Psoas muscle (tissue), 8 donors: ENCODE measurements at regions of chr11 and their contacts with region 1.

Region 1: DNA sequence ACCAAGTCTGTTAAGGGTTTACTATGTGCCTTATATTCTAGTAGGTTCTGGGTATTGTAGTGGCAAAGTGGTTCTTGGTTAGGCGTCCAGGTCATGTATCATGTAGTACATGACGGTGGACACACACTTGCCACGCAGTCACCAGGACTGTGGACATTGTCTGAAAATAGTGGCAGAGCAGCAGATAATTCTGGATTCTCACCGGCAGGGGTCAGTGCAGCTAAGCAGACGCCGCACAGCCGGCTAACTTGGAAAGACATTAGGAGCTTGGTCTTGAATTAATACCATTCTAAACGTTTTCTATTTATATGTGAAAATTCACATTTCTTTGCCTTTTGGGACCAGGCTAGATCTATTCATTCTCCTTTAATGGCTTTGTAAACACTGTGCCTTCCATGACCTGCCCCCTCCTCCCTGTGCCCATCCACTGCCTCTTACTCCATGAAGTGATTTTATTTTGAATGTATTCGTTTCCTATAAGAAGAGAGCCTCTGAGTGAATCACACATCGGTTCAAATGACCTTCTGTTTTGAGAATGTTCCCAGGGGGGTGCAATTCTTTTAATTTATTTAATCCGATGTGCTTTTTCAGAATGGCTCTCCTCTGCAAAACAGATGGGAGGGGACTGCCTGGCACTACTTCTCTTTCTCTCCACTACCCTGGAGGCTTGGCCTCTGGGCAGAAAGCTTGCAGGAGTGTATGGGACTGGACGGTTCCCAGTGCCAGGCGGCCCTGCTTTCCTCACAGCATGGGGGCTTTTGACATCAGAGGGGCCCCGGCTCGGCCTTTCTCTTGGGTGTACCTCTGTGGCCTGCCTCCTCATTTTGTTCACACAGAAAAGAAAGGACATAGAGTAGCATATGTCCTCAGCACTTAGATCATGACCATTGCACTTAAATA is 378.0 kb downstream of the NTM start:
- DNase-seq: peak; percentile 47 to 55
- ATAC-seq: peak in 2 of 4 donors; percentile 54 to 58
- H3K4me3 ChIP-seq: no peak overlapping the region
- H3K27ac ChIP-seq: no peak overlapping the region
- H3K4me1 ChIP-seq: no peaks in the 10 kb centered on the region
- H3K27me3 ChIP-seq: peaks cover 0 to 3% (median 0%) of the 10 kb centered on the region in 3 donors
- CTCF ChIP-seq: peak; percentile 61

Region 2: DNA sequence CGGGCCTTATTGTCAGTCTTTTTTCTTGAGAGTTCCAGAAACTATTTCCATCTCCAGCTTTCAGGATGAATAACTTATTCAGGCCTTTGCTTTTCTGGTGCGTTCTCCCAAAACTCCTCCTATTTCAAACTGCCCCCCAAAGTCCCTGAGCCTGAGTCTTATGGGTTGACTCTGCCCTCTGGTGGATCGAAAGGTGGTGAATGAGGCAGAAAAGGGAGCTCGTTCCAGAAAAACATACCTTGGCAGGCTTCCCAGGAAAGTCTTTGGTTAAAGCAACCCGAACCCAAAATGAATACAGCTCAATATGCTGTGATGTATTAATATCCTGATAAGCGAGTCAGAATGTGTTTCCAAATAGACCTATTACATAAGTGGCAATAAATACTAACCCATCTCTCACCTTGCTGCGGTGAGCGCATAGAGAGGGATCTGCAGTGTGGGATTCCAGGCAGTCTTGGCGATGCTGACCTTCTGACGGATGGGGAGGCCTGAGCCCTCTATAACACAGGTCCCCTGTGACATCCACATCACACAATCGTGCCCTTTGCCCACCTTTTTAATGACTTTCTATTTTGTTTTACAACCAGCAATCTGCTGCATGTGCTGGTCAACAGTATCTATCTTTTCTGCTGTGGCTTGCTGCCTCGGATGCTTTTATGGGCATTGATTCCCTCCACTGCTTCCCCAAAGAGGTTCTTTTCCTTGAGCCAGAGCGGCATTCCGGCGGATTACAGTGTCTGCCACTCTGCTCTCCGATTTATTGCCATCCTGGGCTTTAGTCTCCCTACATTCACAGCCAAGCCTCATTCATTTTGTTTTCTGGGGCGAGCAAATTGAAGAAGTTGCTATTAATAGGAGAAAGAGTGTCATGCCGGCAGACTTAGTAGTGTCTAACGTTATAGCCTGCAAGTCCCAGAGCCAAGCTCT is 378.8 kb after region 1 on chr11:
- intact Hi-C with region 1: loop called in 1 of 2 experiments (anchors 10 kb)
- DNase-seq: peak in 1 of 2 donors; percentile 28
- ATAC-seq: peak in 2 of 4 donors; percentile 44 to 82
- H3K4me3 ChIP-seq: peak overlapping the region; percentile 46
- H3K27ac ChIP-seq: no peak overlapping the region
- H3K4me1 ChIP-seq: peaks cover 4% of the 10 kb centered on the region
- H3K27me3 ChIP-seq: no peaks in the 10 kb centered on the region
- CTCF ChIP-seq: peak; percentile 26

Region 3: DNA sequence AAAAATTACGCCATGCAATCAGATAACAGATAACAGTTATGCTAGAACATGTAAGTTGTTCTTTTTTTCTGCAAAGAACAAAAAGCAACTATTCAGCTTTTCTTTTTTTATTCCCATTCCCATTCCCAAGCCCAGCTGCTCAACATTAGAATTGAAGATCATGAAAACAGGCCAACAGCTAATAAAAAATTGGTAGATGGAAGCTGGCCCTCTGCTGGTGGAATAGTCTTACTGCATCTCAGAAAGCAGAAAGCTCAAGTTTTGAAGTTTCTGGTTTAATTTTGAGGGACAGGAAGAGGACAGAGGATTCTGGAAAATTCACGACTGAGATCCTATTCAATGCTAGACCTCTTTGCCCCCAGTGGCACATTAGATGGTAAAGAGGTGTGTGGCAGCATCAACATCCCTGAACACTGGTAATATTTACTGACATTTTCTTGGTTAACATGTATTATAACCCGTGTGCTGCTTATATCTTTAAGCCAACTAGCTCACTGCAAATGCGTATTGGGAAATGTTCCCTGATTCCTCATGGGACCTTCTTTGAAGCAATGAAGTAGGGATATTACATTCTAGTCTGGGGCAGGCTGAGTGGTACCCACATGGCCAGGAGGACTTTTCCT is 1192.7 kb after region 1 on chr11:
- intact Hi-C with region 1: loop called in 1 of 2 experiments (anchors 5 kb)
- DNase-seq: no peak
- ATAC-seq: no peak
- H3K4me3 ChIP-seq: no peak overlapping the region
- H3K27ac ChIP-seq: no peak overlapping the region
- H3K4me1 ChIP-seq: no peaks in the 10 kb centered on the region
- H3K27me3 ChIP-seq: peaks cover 7 to 33% (median 11%) of the 10 kb centered on the region in 3 donors
- CTCF ChIP-seq: peak; percentile 74